Cardiac septum (tissue), 1 donor: ENCODE measurements at regions of chr1 and their contacts with region 1.

Region 1: DNA sequence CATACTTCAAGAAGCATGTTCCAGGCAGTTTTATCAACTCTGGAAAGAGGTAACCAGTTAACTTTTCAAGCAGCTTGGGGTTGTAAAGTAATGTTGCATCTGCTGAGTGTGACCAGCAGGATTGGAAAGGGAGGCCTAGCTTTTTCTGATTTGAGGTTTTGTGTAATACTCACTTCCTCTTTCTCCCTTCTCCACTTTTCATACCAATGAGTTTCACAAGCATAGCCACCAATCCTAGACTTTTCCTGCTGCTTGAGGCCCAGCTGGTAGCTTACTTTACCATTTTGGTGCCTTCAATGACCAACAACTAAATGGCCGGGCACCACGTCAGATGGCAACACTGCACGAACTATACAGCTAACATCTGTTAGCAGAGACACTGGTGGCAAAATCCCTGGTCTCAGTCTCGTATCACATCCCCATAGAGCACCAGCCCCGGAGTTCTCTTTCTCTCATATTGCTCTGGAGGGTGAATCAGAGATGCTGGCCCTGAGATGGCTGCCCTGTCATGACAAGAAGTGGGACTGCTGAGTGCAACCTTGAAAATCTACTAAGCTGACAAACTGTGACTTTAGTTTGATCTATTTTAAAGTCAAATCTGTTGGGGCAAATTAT is 14.8 kb upstream of the GPR88 start:
- DNase-seq: no peak

Region 2: GRCh38 chr1:100719490-100719889 is 196.3 kb after region 1 on chr1 and contains the start of gene VCAM1:
- intact Hi-C with region 1: loop called (anchors 10 kb)
- DNase-seq: no peak
- total RNA-seq, gene VCAM1: 6.9 TPM